WTC11 (cell line): ENCODE measurements at regions of chr3 and their contacts with region 1.

Region 1: GRCh38 chr3:103295974-103296570 is 861.3 kb downstream of the ZPLD1 start:
- DNase-seq: no peak
- ATAC-seq: no peak
- H3K4me3 Mint-ChIP-seq: no peak overlapping the region
- H3K27ac Mint-ChIP-seq: no peak overlapping the region
- H3K4me1 Mint-ChIP-seq: 0 out of 2 replicates have a peak, but pooled peaks cover 7% of the 10 kb centered on the region
- H3K27me3 Mint-ChIP-seq: no peaks in the 10 kb centered on the region; the same call in 1 of the 2 replicates
- CTCF ChIP-seq: peak; percentile 20; the same call in 1 of the 2 replicates

Region 2: GRCh38 chr3:103410231-103410630 is 114.2 kb after region 1 on chr3:
- CTCF ChIA-PET with region 1: interaction called, 13 read pairs
- POLR2A ChIA-PET with region 1: no interaction called
- DNase-seq: peak; percentile 74
- ATAC-seq: peak; percentile 100
- H3K4me3 Mint-ChIP-seq: no peak overlapping the region
- H3K27ac Mint-ChIP-seq: no peak overlapping the region
- H3K4me1 Mint-ChIP-seq: no peaks in the 10 kb centered on the region
- H3K27me3 Mint-ChIP-seq: no peaks in the 10 kb centered on the region
- CTCF ChIP-seq: peak; percentile 65